ENCODE measurements at regions of chr22 and their contacts with region 1.

Region 1: GRCh38 chr22:37498289-37498909 is 12.2 kb upstream of the MFNG start:
- DNase-seq: peak; percentile 47 to 85 (median 75)
- ATAC-seq: peak; percentile 99
- H3K4me3 ChIP-seq: no peak overlapping the region
- H3K4me3 Mint-ChIP-seq: no peak overlapping the region
- H3K27ac ChIP-seq: no peak overlapping the region
- H3K27ac Mint-ChIP-seq: no peak overlapping the region
- H3K4me1 ChIP-seq: peaks cover 20% of the 10 kb centered on the region
- H3K4me1 Mint-ChIP-seq: peaks cover 29% of the 10 kb centered on the region
- H3K27me3 ChIP-seq: peaks cover 0 to 2% of the 10 kb centered on the region in 2 experiments
- H3K27me3 Mint-ChIP-seq: no peaks in the 10 kb centered on the region
- CTCF ChIP-seq: peak; percentile 67

Region 2: GRCh38 chr22:37330200-37331033 is 168.0 kb before region 1 on chr22:
- CTCF ChIA-PET with region 1: no interaction called
- POLR2A ChIA-PET with region 1: no interaction called
- intact Hi-C with region 1: no loop called
- DNase-seq: peak in 2 of 9 experiments; percentile 38 to 58
- ATAC-seq: no peak
- H3K4me3 ChIP-seq: no peak overlapping the region
- H3K4me3 Mint-ChIP-seq: no peak overlapping the region
- H3K27ac ChIP-seq: no peak overlapping the region
- H3K27ac Mint-ChIP-seq: no peak overlapping the region
- H3K4me1 ChIP-seq: peaks cover 5% of the 10 kb centered on the region
- H3K4me1 Mint-ChIP-seq: peaks cover 7% of the 10 kb centered on the region
- H3K27me3 ChIP-seq: peaks cover 25 to 29% of the 10 kb centered on the region in 2 experiments
- H3K27me3 Mint-ChIP-seq: peaks cover 52% of the 10 kb centered on the region
- CTCF ChIP-seq: no peak

Region 3: DNA sequence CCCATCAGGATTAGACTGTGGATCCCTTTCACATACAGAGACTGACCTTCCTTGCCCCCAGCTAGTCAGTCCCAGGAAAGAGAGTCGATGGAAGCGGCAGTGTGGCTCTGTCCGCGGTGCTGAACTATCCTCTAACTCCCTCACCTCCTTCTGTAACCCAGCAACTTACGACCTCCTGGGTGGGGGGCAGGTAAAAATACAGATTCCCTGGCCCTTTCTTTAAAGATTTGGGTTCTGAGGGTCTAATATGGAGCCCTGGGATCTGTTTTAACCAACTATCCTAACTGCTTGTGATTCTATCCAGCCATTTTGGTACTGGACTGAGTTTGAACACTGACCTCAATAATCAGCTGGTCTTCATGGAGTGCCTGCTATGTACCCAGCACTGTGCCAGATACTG is 35.4 kb before region 1 on chr22:
- CTCF ChIA-PET with region 1: interaction called, 14 read pairs
- POLR2A ChIA-PET with region 1: no interaction called
- intact Hi-C with region 1: loop called in 1 of 2 experiments (anchors 1 kb)
- DNase-seq: peak in 2 of 9 experiments; percentile 26 to 46
- ATAC-seq: no peak
- H3K4me3 ChIP-seq: no peak overlapping the region
- H3K4me3 Mint-ChIP-seq: no peak overlapping the region
- H3K27ac ChIP-seq: no peak overlapping the region
- H3K27ac Mint-ChIP-seq: no peak overlapping the region
- H3K4me1 ChIP-seq: no peaks in the 10 kb centered on the region
- H3K4me1 Mint-ChIP-seq: peaks cover 3% of the 10 kb centered on the region
- H3K27me3 ChIP-seq: no peaks in the 10 kb centered on the region
- H3K27me3 Mint-ChIP-seq: no peaks in the 10 kb centered on the region
- CTCF ChIP-seq: no peak

Region 4: GRCh38 chr22:37472418-37473006 is 25.9 kb before region 1 on chr22:
- CTCF ChIA-PET with region 1: interaction called, 206 read pairs
- POLR2A ChIA-PET with region 1: interaction called, 7 read pairs
- intact Hi-C with region 1: loop called (anchors 1 kb)
- DNase-seq: peak in 8 of 9 experiments; percentile 19 to 71 (median 60)
- ATAC-seq: peak; percentile 44
- H3K4me3 ChIP-seq: no peak overlapping the region
- H3K4me3 Mint-ChIP-seq: no peak overlapping the region
- H3K27ac ChIP-seq: no peak overlapping the region
- H3K27ac Mint-ChIP-seq: peak overlapping the region; percentile 74
- H3K4me1 ChIP-seq: no peaks in the 10 kb centered on the region
- H3K4me1 Mint-ChIP-seq: peaks cover 11% of the 10 kb centered on the region
- H3K27me3 ChIP-seq: no peaks in the 10 kb centered on the region
- H3K27me3 Mint-ChIP-seq: no peaks in the 10 kb centered on the region
- CTCF ChIP-seq: peak; percentile 30

Region 5: GRCh38 chr22:37486224-37486845 is 12.1 kb before region 1 on chr22 and contains the start of gene MFNG:
- CTCF ChIA-PET with region 1: interaction called, 18 read pairs
- POLR2A ChIA-PET with region 1: interaction called, 3 read pairs
- intact Hi-C with region 1: loop called in 1 of 2 experiments (anchors 1 kb)
- DNase-seq: peak; percentile 35 to 87 (median 74)
- ATAC-seq: peak; percentile 59
- H3K4me3 ChIP-seq: peak within 1 kb of the TSS; percentile 73 to 96
- H3K4me3 Mint-ChIP-seq: peak within 1 kb of the TSS; percentile 94
- H3K27ac ChIP-seq: peak within 1 kb of the TSS; percentile 69 to 87
- H3K27ac Mint-ChIP-seq: peak within 1 kb of the TSS; percentile 98
- H3K4me1 ChIP-seq: peaks cover 62% of the 10 kb centered on the region
- H3K4me1 Mint-ChIP-seq: peaks cover 72% of the 10 kb centered on the region
- H3K27me3 ChIP-seq: no peaks in the 10 kb centered on the region
- H3K27me3 Mint-ChIP-seq: no peaks in the 10 kb centered on the region
- CTCF ChIP-seq: no peak
- total RNA-seq, gene MFNG: 63.2 to 63.9 TPM

Region 6: GRCh38 chr22:37508431-37508992 is 10.1 kb after region 1 on chr22:
- CTCF ChIA-PET with region 1: interaction called, 22 read pairs
- POLR2A ChIA-PET with region 1: no interaction called
- intact Hi-C with region 1: no loop called
- DNase-seq: no peak
- ATAC-seq: no peak
- H3K4me3 ChIP-seq: no peak overlapping the region
- H3K4me3 Mint-ChIP-seq: no peak overlapping the region
- H3K27ac ChIP-seq: no peak overlapping the region
- H3K27ac Mint-ChIP-seq: no peak overlapping the region
- H3K4me1 ChIP-seq: no peaks in the 10 kb centered on the region
- H3K4me1 Mint-ChIP-seq: no peaks in the 10 kb centered on the region
- H3K27me3 ChIP-seq: no peaks in the 10 kb centered on the region
- H3K27me3 Mint-ChIP-seq: no peaks in the 10 kb centered on the region
- CTCF ChIP-seq: no peak